SK-N-SH (cell line): ENCODE measurements at regions of chr2 and their contacts with region 1.

Region 1: DNA sequence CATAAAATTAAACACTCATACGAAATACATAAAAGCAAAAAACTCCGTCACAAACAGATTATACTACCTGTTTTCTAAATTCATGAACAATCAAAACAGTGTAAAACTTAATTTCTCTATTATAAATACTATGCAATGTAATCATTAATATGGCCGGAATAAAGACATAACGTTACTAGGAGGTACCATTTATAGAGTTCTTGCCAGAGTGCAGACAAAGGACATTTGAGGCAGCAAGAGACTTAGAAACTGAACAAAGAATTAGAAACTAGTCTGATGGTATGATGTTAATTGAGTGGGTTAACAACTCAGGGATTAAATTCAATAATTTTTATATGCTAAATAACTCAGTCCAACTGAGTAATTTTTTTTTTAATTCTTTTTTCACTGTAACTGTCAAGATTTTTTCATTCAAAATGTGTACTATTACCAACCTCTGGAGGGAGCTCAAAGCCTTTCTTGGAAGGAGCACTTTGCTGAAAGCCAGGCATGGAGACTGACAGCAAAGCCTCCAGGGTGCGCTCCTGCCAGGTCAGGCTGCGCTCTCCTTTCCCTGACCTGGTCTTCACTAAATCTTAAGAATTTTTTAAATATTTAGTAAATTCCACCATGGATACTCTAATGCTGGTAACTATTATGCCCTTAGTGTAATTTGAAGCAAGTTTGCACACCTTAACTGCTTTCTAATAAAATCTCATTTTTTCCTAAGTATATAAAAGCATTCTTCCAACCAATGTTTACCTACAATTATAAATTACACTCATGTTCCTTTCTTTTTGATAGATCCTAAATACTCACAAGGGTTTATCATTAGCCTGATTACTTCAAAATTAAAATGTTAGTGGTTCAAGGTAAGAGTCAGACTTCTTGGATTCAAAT is 34.1 kb downstream of the WDR35 start:
- DNase-seq: peak; percentile 81
- H3K4me3 ChIP-seq: no peak overlapping the region
- H3K27ac ChIP-seq: peak overlapping the region in 1 of 2 experiments; percentile 22; a peak in 1 of 4 replicates
- H3K4me1 ChIP-seq: peaks cover 0 to 11% of the 10 kb centered on the region in 2 experiments; a peak in 2 of 4 replicates
- H3K27me3 ChIP-seq: no peaks in the 10 kb centered on the region
- CTCF ChIP-seq: peak; percentile 97
- EP300 ChIP-seq: no peak
- RAD21 ChIP-seq: peak; percentile 98

Region 2: GRCh38 chr2:19944205-19944845 is 11.5 kb before region 1 on chr2:
- CTCF ChIA-PET with region 1: interaction called, 16 read pairs
- POLR2A ChIA-PET with region 1: no interaction called
- DNase-seq: no peak
- H3K4me3 ChIP-seq: no peak overlapping the region
- H3K27ac ChIP-seq: no peak overlapping the region; a peak in 1 of 4 replicates
- H3K4me1 ChIP-seq: peaks cover 0 to 2% of the 10 kb centered on the region in 2 experiments; a peak in 1 of 4 replicates
- H3K27me3 ChIP-seq: no peaks in the 10 kb centered on the region
- CTCF ChIP-seq: no peak
- EP300 ChIP-seq: no peak
- RAD21 ChIP-seq: no peak

Region 3: DNA sequence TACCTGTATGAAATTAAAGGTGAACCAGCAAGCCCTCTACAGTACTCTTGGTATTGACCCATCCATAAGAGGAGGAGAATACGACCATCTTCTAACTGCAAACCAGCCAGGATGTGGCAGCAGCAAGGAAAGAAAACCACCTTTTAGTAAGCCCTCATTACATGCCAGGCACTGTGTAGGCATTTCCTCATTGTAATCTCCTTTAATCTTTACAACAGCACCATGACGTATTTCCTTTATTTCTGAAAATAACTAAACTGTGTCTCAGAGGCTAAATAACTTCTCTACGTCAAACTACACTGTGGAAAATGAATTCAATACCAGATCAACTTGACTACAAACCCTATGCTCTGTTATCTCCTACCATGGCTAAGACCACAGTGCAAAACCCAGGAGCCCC is 15.9 kb after region 1 on chr2:
- CTCF ChIA-PET with region 1: interaction called, 14 read pairs
- POLR2A ChIA-PET with region 1: no interaction called
- DNase-seq: no peak
- H3K4me3 ChIP-seq: no peak overlapping the region
- H3K27ac ChIP-seq: no peak overlapping the region
- H3K4me1 ChIP-seq: peaks cover 0 to 4% of the 10 kb centered on the region in 2 experiments; a peak in 1 of 4 replicates
- H3K27me3 ChIP-seq: no peaks in the 10 kb centered on the region
- CTCF ChIP-seq: no peak
- EP300 ChIP-seq: no peak
- RAD21 ChIP-seq: no peak

Region 4: DNA sequence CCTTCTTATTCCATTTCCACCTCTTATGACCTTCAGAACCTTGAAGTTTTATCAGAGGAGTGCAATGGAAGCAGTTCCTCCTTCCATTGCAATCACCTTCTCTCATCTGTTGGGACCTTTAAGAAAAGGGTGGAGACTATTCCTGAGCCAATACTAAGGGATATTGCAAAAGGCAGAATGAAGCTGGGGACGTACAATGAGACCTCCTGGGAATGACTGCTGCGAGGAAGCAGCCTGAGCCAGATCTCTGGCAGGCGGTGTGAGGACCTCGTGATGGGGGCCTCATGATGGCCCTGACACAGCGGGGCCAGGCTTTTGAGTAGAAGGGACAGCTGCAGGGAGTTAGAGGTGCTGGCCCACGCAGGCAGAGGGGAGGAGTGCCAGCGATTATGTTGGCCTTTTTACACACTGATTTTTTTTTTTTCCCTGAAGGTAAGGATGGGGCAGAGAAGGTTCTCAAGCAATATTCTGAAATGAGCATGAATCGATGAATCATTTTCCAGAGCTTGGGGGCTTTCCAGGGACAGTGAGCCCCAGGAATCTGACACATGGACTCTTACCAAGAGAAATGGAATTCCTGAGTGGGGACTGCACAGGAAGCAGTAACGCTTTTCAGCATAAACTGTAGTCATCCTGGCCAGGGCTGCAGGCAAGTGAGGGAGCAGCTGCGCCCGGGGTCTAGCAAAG is 135.7 kb after region 1 on chr2:
- CTCF ChIA-PET with region 1: interaction called, 43 read pairs
- POLR2A ChIA-PET with region 1: no interaction called
- DNase-seq: no peak
- H3K4me3 ChIP-seq: no peak overlapping the region
- H3K27ac ChIP-seq: peak overlapping the region in 1 of 2 experiments; percentile 74; a peak in 3 of 4 replicates
- H3K4me1 ChIP-seq: peaks cover 13 to 17% of the 10 kb centered on the region in 2 experiments; a peak in 2 of 4 replicates
- H3K27me3 ChIP-seq: no peaks in the 10 kb centered on the region
- CTCF ChIP-seq: no peak
- EP300 ChIP-seq: peak in 1 of 2 experiments; percentile 83; a peak in 1 of 4 replicates
- RAD21 ChIP-seq: no peak